ENCODE measurements at regions of chr19 and their contacts with region 1.

Region 1: GRCh38 chr19:47243776-47244547 is 12.4 kb upstream of the CCDC9 start:
- DNase-seq: peak; percentile 98
- H3K4me3 Mint-ChIP-seq: peak overlapping the region; percentile 85
- H3K27ac Mint-ChIP-seq: peak overlapping the region; percentile 97
- H3K4me1 Mint-ChIP-seq: peaks cover 25% of the 10 kb centered on the region
- H3K27me3 Mint-ChIP-seq: peaks cover 1% of the 10 kb centered on the region

Region 2: GRCh38 chr19:47013041-47013517 is 230.9 kb before region 1 on chr19:
- intact Hi-C with region 1: loop called (anchors 5 kb)
- DNase-seq: peak; percentile 91
- H3K4me3 Mint-ChIP-seq: peak overlapping the region; percentile 18
- H3K27ac Mint-ChIP-seq: no peak overlapping the region
- H3K4me1 Mint-ChIP-seq: peaks cover 9% of the 10 kb centered on the region
- H3K27me3 Mint-ChIP-seq: peaks cover 16% of the 10 kb centered on the region

Region 3: GRCh38 chr19:47152224-47153017 is 91.5 kb before region 1 on chr19:
- intact Hi-C with region 1: loop called (anchors 1 kb)
- DNase-seq: no peak
- H3K4me3 Mint-ChIP-seq: no peak overlapping the region
- H3K27ac Mint-ChIP-seq: peak overlapping the region; percentile 39
- H3K4me1 Mint-ChIP-seq: peaks cover 47% of the 10 kb centered on the region
- H3K27me3 Mint-ChIP-seq: no peaks in the 10 kb centered on the region

Region 4: GRCh38 chr19:47190167-47190727 is 53.7 kb before region 1 on chr19:
- intact Hi-C with region 1: loop called (anchors 1 kb)
- DNase-seq: peak; percentile 86
- H3K4me3 Mint-ChIP-seq: peak overlapping the region; percentile 62
- H3K27ac Mint-ChIP-seq: peak overlapping the region; percentile 74
- H3K4me1 Mint-ChIP-seq: peaks cover 51% of the 10 kb centered on the region
- H3K27me3 Mint-ChIP-seq: no peaks in the 10 kb centered on the region

Region 5: DNA sequence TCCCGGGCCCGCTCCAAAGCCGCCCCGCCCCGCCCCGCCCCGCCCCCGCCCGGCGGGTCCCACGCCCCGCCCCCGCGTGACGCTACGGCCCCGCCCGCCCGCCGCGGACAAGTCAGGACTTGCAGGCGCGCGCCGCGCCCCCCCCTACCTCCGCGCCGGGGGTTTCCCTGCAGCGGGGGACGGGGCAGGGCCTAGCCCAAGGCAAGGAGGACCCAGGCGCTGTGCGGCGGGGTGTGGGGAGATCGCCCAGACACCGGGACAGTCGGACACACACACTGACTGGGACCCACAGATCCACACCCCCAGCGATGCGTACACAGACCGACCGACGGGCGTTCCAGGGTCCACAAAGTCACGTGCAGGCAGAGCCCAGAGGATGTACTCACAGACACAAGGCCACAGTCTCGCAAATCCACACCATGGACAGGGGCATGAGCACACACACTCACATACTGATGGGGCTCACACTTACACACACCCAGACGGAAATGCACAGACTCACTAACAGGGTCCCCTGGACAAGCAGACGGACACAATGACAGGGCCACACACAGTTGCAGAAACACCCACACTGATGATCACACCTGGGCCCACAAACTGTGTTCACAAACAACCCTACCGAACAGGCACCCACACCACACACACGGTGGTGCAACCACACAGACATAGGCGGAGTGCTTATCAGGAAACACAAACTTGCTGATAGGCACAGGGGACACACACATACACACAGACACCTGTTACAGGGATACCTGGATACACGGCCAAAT is 12.6 kb before region 1 on chr19:
- intact Hi-C with region 1: loop called (anchors 1 kb)
- DNase-seq: peak; percentile 98
- H3K4me3 Mint-ChIP-seq: peak overlapping the region; percentile 84
- H3K27ac Mint-ChIP-seq: peak overlapping the region; percentile 87
- H3K4me1 Mint-ChIP-seq: peaks cover 23% of the 10 kb centered on the region
- H3K27me3 Mint-ChIP-seq: peaks cover 2% of the 10 kb centered on the region